Activated CD4-positive, alpha-beta T cell treated with anti-CD3 and anti-CD28 coated beads, Interleukin-2, amount 10 ng/mL, durations not matched to agents 7 days and 5 days (primary cell): ENCODE measurements at regions of chr13 and their contacts with region 1.

Region 1: GRCh38 chr13:33629605-33630360 is 188.2 kb upstream of the RFC3 start:
- DNase-seq: no peak
- H3K4me3 Mint-ChIP-seq: no peak overlapping the region
- H3K27ac Mint-ChIP-seq: peak overlapping the region; percentile 63
- H3K4me1 Mint-ChIP-seq: peaks cover 2% of the 10 kb centered on the region
- H3K27me3 Mint-ChIP-seq: peaks cover 4% of the 10 kb centered on the region

Region 2: DNA sequence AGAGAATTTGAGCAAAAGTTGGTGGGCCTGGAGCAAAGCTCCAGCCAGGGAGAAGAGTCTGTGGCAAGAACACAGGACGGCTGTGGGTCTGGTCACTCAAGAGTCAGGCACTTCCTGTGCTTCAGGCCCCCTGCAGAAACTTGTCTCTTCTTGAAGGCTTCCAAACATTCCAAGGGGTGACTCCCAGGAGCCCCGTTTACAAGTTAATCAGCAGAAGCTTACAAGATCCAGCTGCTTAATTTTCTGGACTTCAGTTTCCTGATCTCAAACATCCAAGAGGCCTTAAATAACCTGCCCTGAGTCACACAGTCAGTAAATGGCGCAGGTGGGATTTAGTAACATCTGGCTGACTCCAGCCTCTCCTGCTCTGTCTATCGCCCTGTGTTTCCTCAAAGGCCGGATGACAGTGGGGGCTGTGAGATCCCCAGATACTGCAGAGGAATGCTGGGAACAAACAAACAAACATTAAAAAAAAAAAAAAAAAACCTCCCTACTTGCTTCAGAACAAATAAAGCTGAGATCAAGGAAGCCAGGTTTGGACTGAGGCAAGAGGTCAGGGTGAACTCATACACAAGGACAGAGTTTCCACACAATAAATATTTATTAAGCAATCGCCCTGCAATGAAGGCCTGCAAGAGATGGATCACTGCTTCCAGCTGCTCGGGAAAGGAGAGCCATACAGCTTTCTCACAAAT is 12.7 kb after region 1 on chr13:
- CTCF ChIA-PET with region 1: interaction called, 10 read pairs
- POLR2A ChIA-PET with region 1: no interaction called
- DNase-seq: no peak
- H3K4me3 Mint-ChIP-seq: no peak overlapping the region
- H3K27ac Mint-ChIP-seq: no peak overlapping the region
- H3K4me1 Mint-ChIP-seq: peaks cover 5% of the 10 kb centered on the region
- H3K27me3 Mint-ChIP-seq: no peaks in the 10 kb centered on the region